ENCODE measurements at regions of chr5 and their contacts with region 1.

Region 1: DNA sequence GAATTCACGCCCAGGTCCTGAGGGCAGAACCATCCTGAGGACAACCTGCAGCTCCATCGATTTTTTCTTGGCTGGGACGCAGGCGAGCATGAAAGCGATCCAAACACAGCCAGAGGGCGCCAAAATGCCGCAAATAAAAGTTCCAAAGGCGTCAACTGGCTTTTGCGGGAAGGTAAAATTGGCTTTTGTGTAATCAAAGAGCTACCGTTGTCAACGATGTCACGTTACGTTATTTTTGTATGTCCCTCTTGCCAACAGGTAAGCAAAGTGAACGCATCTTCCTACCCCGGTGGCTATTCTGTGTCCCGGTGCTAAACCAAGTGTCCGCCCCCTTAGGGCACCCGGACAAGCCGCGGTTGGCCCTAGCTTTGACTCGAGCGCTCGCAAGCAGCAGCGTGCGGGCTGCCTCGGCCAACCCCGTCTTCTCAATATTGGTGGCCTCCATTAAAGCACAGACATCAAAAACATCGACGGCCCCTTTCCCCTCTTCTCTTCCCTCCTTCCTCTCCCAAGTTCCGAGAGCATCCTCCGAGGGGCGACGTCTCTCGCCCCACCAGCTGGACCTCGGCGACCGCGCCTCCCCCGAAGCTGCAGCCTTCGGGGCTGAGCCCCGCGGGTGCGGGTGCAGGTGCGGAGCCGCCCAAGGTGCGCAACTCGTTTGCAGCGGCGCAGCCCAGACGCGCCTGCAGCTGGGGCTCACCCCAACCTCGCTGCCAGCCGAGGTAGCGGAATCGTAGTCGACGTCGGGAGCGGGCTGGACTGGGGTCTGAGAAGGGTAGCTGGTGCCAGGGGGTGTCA is 1.1 kb upstream of the BASP1 start:
- DNase-seq: peak; percentile 76
- H3K4me3 ChIP-seq: peak overlapping the region; percentile 46 to 57
- H3K27ac ChIP-seq: peak overlapping the region in 1 of 2 experiments; percentile 20; a peak in 1 of 4 replicates
- H3K4me1 ChIP-seq: peaks cover 2 to 11% of the 10 kb centered on the region in 2 experiments; a peak in 3 of 4 replicates
- H3K27me3 ChIP-seq: no peaks in the 10 kb centered on the region
- CTCF ChIP-seq: peak; percentile 91
- EP300 ChIP-seq: no peak
- RAD21 ChIP-seq: peak; percentile 94

Region 2: GRCh38 chr5:17235731-17236330 is 19.5 kb after region 1 on chr5:
- CTCF ChIA-PET with region 1: interaction called, 10 read pairs
- POLR2A ChIA-PET with region 1: no interaction called
- DNase-seq: no peak
- H3K4me3 ChIP-seq: no peak overlapping the region
- H3K27ac ChIP-seq: peak overlapping the region in 1 of 2 experiments; percentile 35; a peak in 1 of 4 replicates
- H3K4me1 ChIP-seq: peaks cover 0 to 21% of the 10 kb centered on the region in 2 experiments; a peak in 2 of 4 replicates
- H3K27me3 ChIP-seq: no peaks in the 10 kb centered on the region
- CTCF ChIP-seq: no peak
- EP300 ChIP-seq: no peak
- RAD21 ChIP-seq: no peak

Region 3: DNA sequence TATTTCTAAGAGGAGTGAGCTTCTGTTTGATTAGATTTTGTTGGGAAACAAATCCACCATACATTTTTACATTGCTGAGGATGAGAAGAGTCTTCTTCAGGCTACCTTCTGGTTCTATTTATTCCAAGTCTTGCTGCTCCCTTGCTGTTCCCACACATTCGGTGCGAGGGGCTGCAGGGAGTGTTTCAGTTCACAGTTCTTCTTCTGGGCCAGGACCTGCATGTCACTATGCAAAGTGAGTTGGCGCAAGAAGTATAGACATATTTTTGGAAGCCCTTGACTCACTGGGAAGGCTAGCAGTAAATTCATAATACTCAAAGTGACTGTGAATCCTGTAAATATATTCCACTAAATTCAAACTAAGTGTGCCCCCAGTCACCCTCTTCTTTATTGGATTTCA is 1075.8 kb after region 1 on chr5:
- CTCF ChIA-PET with region 1: interaction called, 39 read pairs
- POLR2A ChIA-PET with region 1: no interaction called
- DNase-seq: no peak
- H3K4me3 ChIP-seq: no peak overlapping the region
- H3K27ac ChIP-seq: no peak overlapping the region
- H3K4me1 ChIP-seq: no peaks in the 10 kb centered on the region
- H3K27me3 ChIP-seq: no peaks in the 10 kb centered on the region
- CTCF ChIP-seq: no peak
- EP300 ChIP-seq: no peak
- RAD21 ChIP-seq: no peak

Region 4: DNA sequence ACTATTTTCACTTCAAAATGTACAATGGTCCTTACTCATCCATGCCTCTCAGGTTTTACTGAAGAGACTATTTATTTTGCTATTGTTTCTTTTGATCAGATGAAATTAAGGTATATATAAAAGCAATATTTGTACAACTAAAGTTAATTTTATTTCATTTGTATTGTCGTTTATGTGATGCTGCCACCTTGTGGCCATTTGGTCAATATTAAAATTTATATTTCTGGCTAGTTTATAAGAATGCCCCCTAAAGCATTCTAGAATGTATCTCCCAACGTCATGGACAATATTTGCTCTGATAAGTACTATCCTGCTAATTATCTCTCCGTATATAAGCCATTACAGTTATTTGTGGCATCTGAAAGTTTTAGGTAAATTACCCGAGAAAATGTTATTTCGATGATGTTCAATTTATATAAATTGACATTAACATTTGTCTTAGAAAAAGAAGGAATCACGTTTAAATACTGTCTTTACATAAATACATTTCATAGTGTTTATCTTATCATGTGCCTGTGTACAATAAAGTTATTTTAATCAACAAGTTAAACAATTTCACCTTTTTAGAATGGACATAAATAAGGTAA is 1097.9 kb after region 1 on chr5:
- CTCF ChIA-PET with region 1: interaction called, 23 read pairs
- POLR2A ChIA-PET with region 1: no interaction called
- DNase-seq: peak; percentile 31
- H3K4me3 ChIP-seq: peak overlapping the region in 1 of 2 experiments; percentile 0; a peak in 1 of 4 replicates
- H3K27ac ChIP-seq: no peak overlapping the region
- H3K4me1 ChIP-seq: no peaks in the 10 kb centered on the region
- H3K27me3 ChIP-seq: no peaks in the 10 kb centered on the region; the same call in 1 of the 2 replicates
- CTCF ChIP-seq: peak; percentile 78
- EP300 ChIP-seq: no peak
- RAD21 ChIP-seq: peak; percentile 44